CD8-positive, alpha-beta memory T cell (primary cell): ENCODE measurements at regions of chr17 and their contacts with region 1.

Region 1: GRCh38 chr17:28726226-28727130 is at the start of gene TLCD1:
- DNase-seq: peak; percentile 83 to 92 (median 85)
- H3K4me3 ChIP-seq: peak within 1 kb of the TSS; percentile 91
- H3K4me3 Mint-ChIP-seq: peak within 1 kb of the TSS; percentile 94 to 99 (median 97)
- H3K27ac ChIP-seq: peak within 1 kb of the TSS; percentile 97
- H3K27ac Mint-ChIP-seq: peak within 1 kb of the TSS; percentile 97 to 100 (median 99)
- H3K4me1 ChIP-seq: peaks cover 33% of the 10 kb centered on the region
- H3K4me1 Mint-ChIP-seq: peaks cover 51 to 72% (median 54%) of the 10 kb centered on the region in 3 donors
- H3K27me3 ChIP-seq: no peaks in the 10 kb centered on the region
- H3K27me3 Mint-ChIP-seq: peaks cover 0 to 5% of the 10 kb centered on the region in 2 donors
- total RNA-seq, gene TLCD1: 36.5 to 38.9 TPM

Region 2: GRCh38 chr17:28655160-28655840 is 71.2 kb before region 1 on chr17:
- CTCF ChIA-PET with region 1: no interaction called
- POLR2A ChIA-PET with region 1: no interaction called
- DNase-seq: no peak
- H3K4me3 ChIP-seq: no peak overlapping the region
- H3K4me3 Mint-ChIP-seq: peak overlapping the region in 1 of 7 donors; percentile 50
- H3K27ac ChIP-seq: no peak overlapping the region
- H3K27ac Mint-ChIP-seq: peak overlapping the region in 6 of 8 donors; percentile 34 to 81 (median 49)
- H3K4me1 ChIP-seq: peaks cover 3% of the 10 kb centered on the region
- H3K4me1 Mint-ChIP-seq: peaks cover 15 to 34% (median 25%) of the 10 kb centered on the region in 3 donors
- H3K27me3 ChIP-seq: no peaks in the 10 kb centered on the region
- H3K27me3 Mint-ChIP-seq: no peaks in the 10 kb centered on the region

Region 3: DNA sequence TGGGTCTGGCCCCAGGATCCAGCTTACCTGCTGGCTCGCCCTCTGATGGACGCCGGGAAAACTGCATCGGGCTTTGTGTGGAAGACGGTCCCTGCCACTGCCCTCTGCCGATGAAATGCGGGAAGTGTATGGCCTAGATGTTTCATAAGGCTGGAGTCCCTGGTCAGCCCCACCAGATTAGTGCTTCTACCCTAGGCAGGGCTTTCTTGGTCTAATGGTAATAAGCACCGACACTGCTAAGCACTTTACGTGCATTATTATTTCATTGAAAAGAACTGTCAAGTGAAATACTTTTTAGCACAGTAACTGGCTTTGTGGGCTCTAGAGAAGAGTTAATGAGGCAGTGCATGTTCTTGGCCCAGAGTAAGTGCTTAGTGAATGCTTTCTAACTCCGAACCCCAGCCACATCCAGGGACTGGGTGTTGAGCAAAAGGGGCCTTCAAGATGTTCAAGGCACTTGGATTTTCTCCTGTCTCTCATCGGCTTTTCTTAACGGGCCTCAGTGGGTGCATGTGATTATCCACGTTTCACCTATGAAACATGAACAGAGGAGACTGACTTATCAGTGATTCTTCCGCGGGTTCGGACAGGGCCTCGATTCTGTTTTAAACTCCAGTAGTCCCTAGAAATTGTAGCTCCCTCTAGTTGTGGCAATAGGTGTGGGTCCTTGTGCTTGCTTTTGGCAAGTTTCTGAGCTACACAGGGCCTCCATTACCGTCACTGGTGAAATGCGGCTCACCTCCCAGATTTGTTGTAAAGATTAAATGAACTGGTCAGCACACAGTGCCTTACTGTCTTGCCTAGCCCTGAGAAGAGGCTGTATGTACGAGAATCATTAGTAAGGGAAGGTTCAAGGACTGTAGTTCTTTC is 23.9 kb after region 1 on chr17:
- CTCF ChIA-PET with region 1: interaction called, 579 read pairs
- POLR2A ChIA-PET with region 1: interaction called, 128 read pairs
- DNase-seq: peak; percentile 81 to 91 (median 84)
- H3K4me3 ChIP-seq: no peak overlapping the region
- H3K4me3 Mint-ChIP-seq: peak overlapping the region in 1 of 7 donors; percentile 60
- H3K27ac ChIP-seq: no peak overlapping the region
- H3K27ac Mint-ChIP-seq: peak overlapping the region in 4 of 8 donors; percentile 33 to 86 (median 58)
- H3K4me1 ChIP-seq: peaks cover 19% of the 10 kb centered on the region
- H3K4me1 Mint-ChIP-seq: peaks cover 3 to 21% (median 11%) of the 10 kb centered on the region in 3 donors
- H3K27me3 ChIP-seq: no peaks in the 10 kb centered on the region
- H3K27me3 Mint-ChIP-seq: no peaks in the 10 kb centered on the region

Region 4: GRCh38 chr17:28842282-28843012 is 116.0 kb after region 1 on chr17 and contains the start of gene FAM222B:
- CTCF ChIA-PET with region 1: interaction called, 11 read pairs
- POLR2A ChIA-PET with region 1: no interaction called
- DNase-seq: peak; percentile 82 to 91 (median 85)
- H3K4me3 ChIP-seq: peak within 1 kb of the TSS; percentile 82
- H3K4me3 Mint-ChIP-seq: peak within 1 kb of the TSS; percentile 95 to 99 (median 98)
- H3K27ac ChIP-seq: peak within 1 kb of the TSS; percentile 80
- H3K27ac Mint-ChIP-seq: peak within 1 kb of the TSS; percentile 84 to 98 (median 98)
- H3K4me1 ChIP-seq: peaks cover 11% of the 10 kb centered on the region
- H3K4me1 Mint-ChIP-seq: peaks cover 20 to 35% (median 31%) of the 10 kb centered on the region in 3 donors
- H3K27me3 ChIP-seq: no peaks in the 10 kb centered on the region
- H3K27me3 Mint-ChIP-seq: no peaks in the 10 kb centered on the region
- total RNA-seq, gene FAM222B: 20.6 to 21.5 TPM

Region 5: GRCh38 chr17:28916302-28916934 is 189.9 kb after region 1 on chr17:
- CTCF ChIA-PET with region 1: interaction called, 16 read pairs
- POLR2A ChIA-PET with region 1: no interaction called
- DNase-seq: peak in 4 of 5 donors; percentile 20 to 62 (median 38)
- H3K4me3 ChIP-seq: no peak overlapping the region
- H3K4me3 Mint-ChIP-seq: no peak overlapping the region
- H3K27ac ChIP-seq: no peak overlapping the region
- H3K27ac Mint-ChIP-seq: peak overlapping the region; percentile 11 to 87 (median 72)
- H3K4me1 ChIP-seq: no peaks in the 10 kb centered on the region
- H3K4me1 Mint-ChIP-seq: peaks cover 8 to 16% (median 15%) of the 10 kb centered on the region in 3 donors
- H3K27me3 ChIP-seq: no peaks in the 10 kb centered on the region
- H3K27me3 Mint-ChIP-seq: no peaks in the 10 kb centered on the region

Region 6: GRCh38 chr17:28967221-28968140 is 241.0 kb after region 1 on chr17:
- CTCF ChIA-PET with region 1: interaction called, 14 read pairs
- POLR2A ChIA-PET with region 1: no interaction called
- DNase-seq: peak in 1 of 5 donors; percentile 18
- H3K4me3 ChIP-seq: no peak overlapping the region
- H3K4me3 Mint-ChIP-seq: no peak overlapping the region
- H3K27ac ChIP-seq: no peak overlapping the region
- H3K27ac Mint-ChIP-seq: no peak overlapping the region
- H3K4me1 ChIP-seq: no peaks in the 10 kb centered on the region
- H3K4me1 Mint-ChIP-seq: peaks cover 0 to 3% (median 0%) of the 10 kb centered on the region in 3 donors
- H3K27me3 ChIP-seq: no peaks in the 10 kb centered on the region
- H3K27me3 Mint-ChIP-seq: peaks cover 8 to 26% of the 10 kb centered on the region in 2 donors